CD4-positive, alpha-beta T cell (primary cell): ENCODE measurements at regions of chr17 and their contacts with region 1.

Region 1: DNA sequence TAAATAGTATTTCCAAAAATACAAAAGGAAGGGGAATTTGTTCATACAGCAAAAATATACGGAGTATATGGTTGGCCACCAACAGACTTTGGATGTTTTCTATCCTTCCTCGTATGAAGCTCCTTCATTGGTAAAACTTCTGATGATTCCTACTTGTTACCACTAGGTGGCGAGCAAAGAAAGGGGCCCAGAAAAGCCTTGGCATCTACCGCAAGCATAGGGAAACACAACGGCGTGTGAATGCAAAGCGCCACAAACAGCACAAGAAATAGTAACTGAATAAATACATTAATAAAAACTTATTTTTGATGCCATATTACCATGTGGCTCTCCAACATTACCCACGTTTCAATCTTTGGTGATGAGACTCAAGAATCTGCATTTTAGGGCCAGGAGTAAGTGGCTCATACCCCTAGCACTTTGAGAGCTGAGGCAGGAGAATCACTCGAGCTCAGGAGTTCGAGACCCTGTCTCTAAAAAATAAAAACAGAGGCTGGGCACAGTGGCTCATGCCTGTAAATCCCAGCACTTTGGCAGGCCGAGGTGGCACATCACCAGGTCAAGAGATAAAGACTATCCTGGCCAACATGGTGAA is 34.5 kb downstream of the YWHAE start:
- DNase-seq: peak; percentile 28 to 87 (median 50)
- ATAC-seq: peak; percentile 73
- H3K4me3 ChIP-seq: no peak overlapping the region
- H3K4me3 Mint-ChIP-seq: peak overlapping the region; percentile 12
- H3K27ac ChIP-seq: peak overlapping the region in 1 of 2 donors; percentile 9
- H3K27ac Mint-ChIP-seq: peak overlapping the region; percentile 66
- H3K4me1 ChIP-seq: peaks cover 50% of the 10 kb centered on the region
- H3K4me1 Mint-ChIP-seq: peaks cover 76% of the 10 kb centered on the region
- H3K27me3 ChIP-seq: no peaks in the 10 kb centered on the region
- H3K27me3 Mint-ChIP-seq: no peaks in the 10 kb centered on the region
- CTCF ChIP-seq: peak; percentile 86

Region 2: GRCh38 chr17:1095090-1095852 is 270.3 kb before region 1 on chr17:
- CTCF ChIA-PET with region 1: no interaction called
- POLR2A ChIA-PET with region 1: no interaction called
- intact Hi-C with region 1: no loop called
- DNase-seq: peak in 2 of 14 experiments; percentile 60 to 68
- ATAC-seq: no peak
- H3K4me3 ChIP-seq: no peak overlapping the region
- H3K4me3 Mint-ChIP-seq: no peak overlapping the region
- H3K27ac ChIP-seq: peak overlapping the region in 1 of 2 donors; percentile 40
- H3K27ac Mint-ChIP-seq: no peak overlapping the region
- H3K4me1 ChIP-seq: peaks cover 29% of the 10 kb centered on the region
- H3K4me1 Mint-ChIP-seq: peaks cover 36% of the 10 kb centered on the region
- H3K27me3 ChIP-seq: no peaks in the 10 kb centered on the region
- H3K27me3 Mint-ChIP-seq: no peaks in the 10 kb centered on the region
- CTCF ChIP-seq: no peak

Region 3: GRCh38 chr17:1331708-1332107 is 33.8 kb before region 1 on chr17:
- CTCF ChIA-PET with region 1: interaction called, 11 read pairs
- POLR2A ChIA-PET with region 1: no interaction called
- intact Hi-C with region 1: no loop called
- DNase-seq: peak in 8 of 14 experiments; percentile 5 to 41 (median 24)
- ATAC-seq: peak; percentile 97
- H3K4me3 ChIP-seq: no peak overlapping the region
- H3K4me3 Mint-ChIP-seq: peak overlapping the region; percentile 3
- H3K27ac ChIP-seq: no peak overlapping the region
- H3K27ac Mint-ChIP-seq: no peak overlapping the region
- H3K4me1 ChIP-seq: peaks cover 14% of the 10 kb centered on the region
- H3K4me1 Mint-ChIP-seq: peaks cover 12% of the 10 kb centered on the region
- H3K27me3 ChIP-seq: peaks cover 0 to 7% of the 10 kb centered on the region in 2 experiments
- H3K27me3 Mint-ChIP-seq: no peaks in the 10 kb centered on the region
- CTCF ChIP-seq: no peak

Region 4: GRCh38 chr17:1379930-1380313 is 14.4 kb after region 1 on chr17:
- CTCF ChIA-PET with region 1: interaction called, 24 read pairs
- POLR2A ChIA-PET with region 1: interaction called, 10 read pairs
- intact Hi-C with region 1: no loop called
- DNase-seq: peak in 2 of 14 experiments; percentile 68 to 76
- ATAC-seq: peak; percentile 62
- H3K4me3 ChIP-seq: no peak overlapping the region
- H3K4me3 Mint-ChIP-seq: peak overlapping the region; percentile 27
- H3K27ac ChIP-seq: peak overlapping the region; percentile 24 to 41
- H3K27ac Mint-ChIP-seq: peak overlapping the region; percentile 74
- H3K4me1 ChIP-seq: peaks cover 86% of the 10 kb centered on the region
- H3K4me1 Mint-ChIP-seq: peaks cover 72% of the 10 kb centered on the region
- H3K27me3 ChIP-seq: no peaks in the 10 kb centered on the region
- H3K27me3 Mint-ChIP-seq: no peaks in the 10 kb centered on the region
- CTCF ChIP-seq: no peak

Region 5: DNA sequence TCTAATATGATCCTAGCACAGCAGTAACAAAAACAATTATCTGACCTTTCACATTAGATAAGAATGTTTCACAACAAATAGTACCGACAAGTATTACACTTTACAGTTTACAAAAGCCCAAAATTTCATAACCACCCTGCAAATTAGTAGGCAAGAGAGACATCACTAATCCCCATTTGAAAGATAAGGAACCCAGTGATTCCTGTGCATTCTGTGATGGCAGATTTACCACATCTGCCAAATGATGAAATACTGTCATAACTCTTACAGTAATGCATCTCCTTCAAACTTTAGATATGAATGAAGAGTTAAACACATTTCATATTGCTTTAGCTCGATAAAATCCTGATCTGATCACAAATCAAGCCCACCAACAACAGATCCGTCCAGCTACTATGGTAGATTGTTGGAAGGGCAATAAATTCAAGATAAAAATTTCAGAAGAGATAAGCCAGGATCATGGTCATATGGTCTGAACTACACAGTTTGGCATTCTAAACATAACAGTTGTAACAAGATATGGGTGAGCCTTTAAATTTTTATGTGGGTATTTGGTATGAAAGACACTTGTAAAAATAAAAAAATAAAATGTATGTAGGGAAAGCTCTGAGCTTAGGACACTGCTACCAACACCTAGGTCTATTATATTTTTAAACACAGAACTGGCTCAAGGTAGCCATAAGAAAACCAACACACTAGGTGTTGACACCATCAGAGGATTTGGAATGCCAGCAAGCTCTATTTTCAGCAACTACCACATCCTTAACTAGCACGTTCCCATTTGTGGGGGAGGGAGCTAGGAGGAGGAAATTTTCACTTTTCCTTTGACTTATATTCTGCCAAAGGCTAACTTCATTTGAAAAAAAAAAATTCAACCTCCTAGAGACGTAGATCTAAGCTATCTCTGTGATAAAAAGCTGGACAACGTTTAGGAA is 25.2 kb after region 1 on chr17:
- CTCF ChIA-PET with region 1: interaction called, 13 read pairs
- POLR2A ChIA-PET with region 1: interaction called, 5 read pairs
- intact Hi-C with region 1: no loop called
- DNase-seq: peak in 2 of 14 experiments; percentile 32 to 33
- ATAC-seq: no peak
- H3K4me3 ChIP-seq: no peak overlapping the region
- H3K4me3 Mint-ChIP-seq: peak overlapping the region; percentile 49
- H3K27ac ChIP-seq: peak overlapping the region in 1 of 2 donors; percentile 2
- H3K27ac Mint-ChIP-seq: peak overlapping the region; percentile 49
- H3K4me1 ChIP-seq: peaks cover 83% of the 10 kb centered on the region
- H3K4me1 Mint-ChIP-seq: peaks cover 80% of the 10 kb centered on the region
- H3K27me3 ChIP-seq: no peaks in the 10 kb centered on the region
- H3K27me3 Mint-ChIP-seq: no peaks in the 10 kb centered on the region
- CTCF ChIP-seq: no peak

Region 6: GRCh38 chr17:1455797-1456599 is 90.5 kb after region 1 on chr17 and contains the start of gene CRK:
- CTCF ChIA-PET with region 1: interaction called, 13 read pairs
- POLR2A ChIA-PET with region 1: interaction called, 3 read pairs
- intact Hi-C with region 1: loop called (anchors 5 kb)
- DNase-seq: peak; percentile 95 to 99 (median 99)
- ATAC-seq: peak; percentile 91
- H3K4me3 ChIP-seq: peak within 1 kb of the TSS; percentile 80
- H3K4me3 Mint-ChIP-seq: peak within 1 kb of the TSS; percentile 96
- H3K27ac ChIP-seq: peak within 1 kb of the TSS; percentile 88 to 91
- H3K27ac Mint-ChIP-seq: peak within 1 kb of the TSS; percentile 81
- H3K4me1 ChIP-seq: peaks cover 54% of the 10 kb centered on the region
- H3K4me1 Mint-ChIP-seq: peaks cover 51% of the 10 kb centered on the region
- H3K27me3 ChIP-seq: no peaks in the 10 kb centered on the region
- H3K27me3 Mint-ChIP-seq: no peaks in the 10 kb centered on the region
- CTCF ChIP-seq: no peak
- total RNA-seq, gene CRK: 13.6 to 14.5 TPM

Region 7: GRCh38 chr17:1516388-1517161 is 151.0 kb after region 1 on chr17 and contains the start of gene INPP5K:
- CTCF ChIA-PET with region 1: interaction called, 67 read pairs
- POLR2A ChIA-PET with region 1: interaction called, 98 read pairs
- intact Hi-C with region 1: loop called (anchors 1 kb)
- DNase-seq: peak; percentile 94 to 100 (median 97)
- ATAC-seq: peak; percentile 92
- H3K4me3 ChIP-seq: peak within 1 kb of the TSS; percentile 98
- H3K4me3 Mint-ChIP-seq: peak within 1 kb of the TSS; percentile 94
- H3K27ac ChIP-seq: peak within 1 kb of the TSS; percentile 88 to 93
- H3K27ac Mint-ChIP-seq: peak within 1 kb of the TSS; percentile 92
- H3K4me1 ChIP-seq: peaks cover 39% of the 10 kb centered on the region
- H3K4me1 Mint-ChIP-seq: peaks cover 26% of the 10 kb centered on the region
- H3K27me3 ChIP-seq: no peaks in the 10 kb centered on the region
- H3K27me3 Mint-ChIP-seq: no peaks in the 10 kb centered on the region
- CTCF ChIP-seq: no peak
- total RNA-seq, gene INPP5K: 199 to 207 TPM

Region 8: GRCh38 chr17:1628856-1629646 is 263.5 kb after region 1 on chr17:
- CTCF ChIA-PET with region 1: interaction called, 5 read pairs
- POLR2A ChIA-PET with region 1: interaction called, 10 read pairs
- intact Hi-C with region 1: loop called (anchors 2 to 5 kb)
- DNase-seq: peak; percentile 76 to 94 (median 87)
- ATAC-seq: peak; percentile 75
- H3K4me3 ChIP-seq: peak overlapping the region; percentile 76
- H3K4me3 Mint-ChIP-seq: peak overlapping the region; percentile 96
- H3K27ac ChIP-seq: peak overlapping the region in 1 of 2 donors; percentile 46
- H3K27ac Mint-ChIP-seq: peak overlapping the region; percentile 77
- H3K4me1 ChIP-seq: peaks cover 34% of the 10 kb centered on the region
- H3K4me1 Mint-ChIP-seq: peaks cover 23% of the 10 kb centered on the region
- H3K27me3 ChIP-seq: peaks cover 0 to 5% of the 10 kb centered on the region in 2 experiments
- H3K27me3 Mint-ChIP-seq: no peaks in the 10 kb centered on the region
- CTCF ChIP-seq: no peak